ENCODE measurements at regions of chr16 and their contacts with region 1.

Region 1: GRCh38 chr16:29995911-29996772 is at the start of gene INO80E:
- DNase-seq: peak; percentile 99
- ATAC-seq: peak; percentile 99
- total RNA-seq, gene INO80E: 32.4 TPM

Region 2: GRCh38 chr16:28943281-28943680 is 1052.9 kb before region 1 on chr16:
- intact Hi-C with region 1: loop called (anchors 5 kb)
- DNase-seq: no peak
- ATAC-seq: no peak

Region 3: DNA sequence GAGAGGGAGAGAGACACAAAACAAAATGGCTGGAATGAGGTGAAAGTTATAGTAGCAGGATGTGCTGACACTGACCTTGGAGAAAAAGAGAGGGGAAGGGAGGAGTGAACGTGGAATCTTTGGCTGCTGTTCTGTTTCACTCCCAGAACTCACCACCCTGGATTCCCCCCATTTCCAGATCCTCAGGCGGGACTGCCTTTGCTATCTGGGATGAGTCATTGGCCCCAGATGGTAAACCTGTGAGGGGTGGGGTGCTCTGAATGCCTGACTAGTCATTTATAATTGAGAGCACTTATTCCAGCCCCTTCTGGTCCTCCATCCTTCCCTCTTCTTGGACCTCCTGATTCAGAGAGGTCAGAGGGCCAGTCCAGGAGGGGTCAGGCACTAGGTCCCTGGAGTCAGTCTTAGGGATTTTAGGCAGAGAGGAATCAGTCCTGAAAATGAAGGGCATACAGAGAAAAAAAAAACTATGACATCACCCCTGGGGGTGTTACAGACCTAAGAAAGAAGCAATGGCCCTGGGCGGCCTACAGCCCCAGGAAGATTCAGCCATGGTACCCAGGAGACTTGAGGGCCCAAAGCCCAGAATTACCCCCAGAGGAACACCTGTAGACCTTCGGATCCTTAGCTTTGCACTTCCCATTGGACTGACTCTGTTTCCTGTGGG is 220.3 kb before region 1 on chr16:
- intact Hi-C with region 1: no loop called
- DNase-seq: no peak
- ATAC-seq: no peak

Region 4: GRCh38 chr16:29961479-29962343 is 34.4 kb before region 1 on chr16 and contains the start of gene TMEM219:
- intact Hi-C with region 1: loop called (anchors 1 kb)
- DNase-seq: peak; percentile 95
- ATAC-seq: peak; percentile 99
- total RNA-seq, gene TMEM219: 74.4 TPM

Region 5: GRCh38 chr16:29973384-29974246 is 22.5 kb before region 1 on chr16 and contains the start of gene TAOK2:
- intact Hi-C with region 1: loop called (anchors 2 kb)
- DNase-seq: peak; percentile 99
- ATAC-seq: peak; percentile 99
- total RNA-seq, gene TAOK2: 32.7 TPM

Region 6: DNA sequence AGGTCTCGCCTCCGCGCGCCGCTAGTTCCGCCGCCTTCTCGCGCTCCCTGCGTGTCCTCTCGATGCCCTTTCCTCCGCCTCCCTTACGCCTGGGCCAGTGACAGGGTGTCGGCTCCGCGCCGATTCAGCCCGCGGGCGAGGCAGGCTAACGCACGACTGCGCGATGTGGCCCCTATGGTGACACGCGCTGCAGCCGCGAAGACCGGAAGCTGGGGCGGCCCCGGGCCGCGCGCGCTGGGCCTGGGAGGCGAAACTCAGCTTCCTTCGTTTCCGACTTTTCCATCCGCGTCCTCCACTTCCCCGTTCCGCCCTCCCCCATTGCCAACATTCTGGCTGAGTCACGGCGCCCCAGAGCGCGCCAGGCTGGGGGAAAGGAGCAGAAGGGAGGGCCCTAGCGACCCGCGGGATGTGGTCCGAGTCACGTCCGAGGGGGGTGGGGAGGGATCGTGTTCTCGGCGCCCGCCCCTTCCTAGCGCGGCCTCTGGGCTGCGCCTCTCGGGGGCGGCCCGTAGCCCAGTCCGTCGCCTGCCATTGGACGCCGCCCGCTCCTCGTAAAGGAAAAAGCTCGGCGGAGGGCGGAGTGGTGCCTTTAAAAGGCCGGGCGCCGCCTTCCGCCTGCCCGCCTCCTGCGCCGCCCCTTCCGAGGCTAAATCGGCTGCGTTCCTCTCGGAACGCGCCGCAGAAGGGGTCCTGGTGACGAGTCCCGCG is 69.2 kb after region 1 on chr16 and contains the start of gene ALDOA:
- intact Hi-C with region 1: no loop called
- DNase-seq: peak; percentile 99
- ATAC-seq: peak; percentile 91
- total RNA-seq, gene ALDOA: 4,126 TPM

Measured in Right ventricle myocardium inferior (tissue), 1 donor.